HepG2 (cell line): ENCODE measurements at regions of chr9 and their contacts with region 1.

Region 1: DNA sequence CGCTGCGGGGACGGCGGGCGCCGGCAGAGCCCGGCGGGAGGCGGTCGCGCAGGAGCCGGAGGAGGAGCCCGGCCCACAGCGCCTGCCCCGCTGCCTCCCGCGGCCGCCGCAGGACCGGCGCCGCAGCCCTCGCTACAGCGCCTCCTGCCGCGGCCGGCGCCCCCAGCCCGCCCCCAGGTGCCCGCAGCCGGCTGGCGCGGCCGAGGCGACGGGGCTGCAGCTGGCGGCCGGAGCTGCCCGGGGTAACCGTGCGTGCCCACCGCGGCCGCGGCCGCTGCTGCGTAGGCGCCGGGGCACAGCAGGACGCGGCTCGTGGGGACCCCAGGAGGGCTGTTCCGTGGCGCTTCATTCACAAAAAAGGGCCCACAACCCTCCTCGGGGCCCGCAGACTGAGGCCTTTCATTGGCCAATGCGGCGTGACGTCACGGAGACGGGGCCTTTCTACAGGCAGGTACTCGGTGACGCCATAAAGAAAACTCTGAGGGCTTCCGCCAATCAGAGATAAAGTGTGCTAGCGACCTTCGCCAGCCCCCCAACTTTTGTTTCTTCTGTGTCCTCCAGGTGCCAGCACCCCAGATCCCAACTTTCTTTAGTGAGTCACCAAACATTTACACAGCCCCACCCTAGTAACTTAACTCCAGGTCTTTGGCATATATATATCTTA is at the start of gene CDC14B:
- DNase-seq: peak; percentile 92
- ATAC-seq: peak; percentile 74
- H3K4me3 ChIP-seq: peak within 1 kb of the TSS; percentile 85 to 89 (median 87)
- H3K27ac ChIP-seq: peak within 1 kb of the TSS; percentile 65
- H3K4me1 ChIP-seq: peaks cover 37% of the 10 kb centered on the region
- H3K27me3 ChIP-seq: no peaks in the 10 kb centered on the region; a peak in 1 of 5 replicates
- CTCF ChIP-seq: peak; percentile 17
- EP300 ChIP-seq: no peak
- POLR2A ChIP-seq: peak in 1 of 2 experiments; percentile 55; a peak in 1 of 4 replicates
- RAD21 ChIP-seq: peak; percentile 25; the same call in 1 of the 2 replicates
- total RNA-seq, gene CDC14B: 33.3 and 37.7 TPM in 2 replicates

Region 2: DNA sequence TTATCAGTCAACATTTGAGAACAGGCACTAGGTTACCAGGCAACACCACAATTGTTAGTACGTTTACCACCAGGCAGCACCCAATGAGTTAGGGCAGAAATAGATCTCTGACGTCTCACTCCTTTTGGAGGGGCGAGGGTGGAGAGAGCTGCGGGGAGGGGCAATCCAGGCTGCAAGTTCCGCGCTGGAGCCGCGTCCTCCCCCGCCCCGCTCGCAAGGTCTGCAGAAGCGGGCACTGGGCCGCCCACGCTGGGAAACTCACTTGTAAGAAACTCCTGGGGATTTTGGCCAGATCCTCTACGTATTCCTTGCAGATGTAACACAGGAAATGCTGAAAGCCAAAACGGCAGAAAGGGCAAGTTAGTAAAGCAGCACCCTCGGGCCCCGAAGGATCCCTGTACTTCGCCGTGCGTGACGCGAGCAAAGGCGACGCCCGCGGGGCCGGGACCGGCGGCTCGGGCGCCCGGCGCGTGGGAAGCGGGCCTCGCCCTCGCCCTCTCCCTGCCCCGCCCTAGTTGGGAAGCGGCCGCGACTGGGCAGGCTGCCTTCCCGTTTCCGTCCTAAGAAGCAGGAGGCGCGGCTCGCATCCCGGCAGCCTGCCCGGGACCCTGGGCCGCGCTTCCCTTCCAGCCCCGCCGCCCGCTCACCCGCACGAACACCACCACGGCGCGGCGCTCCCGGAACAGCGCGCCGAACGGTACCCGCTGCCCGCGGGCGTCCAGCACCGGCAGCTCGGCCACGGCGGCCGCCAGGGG is 35.0 kb after region 1 on chr9:
- CTCF ChIA-PET with region 1: no interaction called
- POLR2A ChIA-PET with region 1: interaction called, 5 read pairs
- in situ Hi-C with region 1: no loop called
- intact Hi-C with region 1: loop called (anchors 5 kb)
- DNase-seq: peak; percentile 41
- ATAC-seq: peak; percentile 73
- H3K4me3 ChIP-seq: peak overlapping the region; percentile 81 to 86 (median 81)
- H3K27ac ChIP-seq: peak overlapping the region; percentile 86
- H3K4me1 ChIP-seq: peaks cover 32% of the 10 kb centered on the region
- H3K27me3 ChIP-seq: no peaks in the 10 kb centered on the region; a peak in 1 of 5 replicates
- CTCF ChIP-seq: peak; percentile 40
- EP300 ChIP-seq: no peak
- POLR2A ChIP-seq: peak in 1 of 2 experiments; percentile 28; a peak in 1 of 4 replicates
- RAD21 ChIP-seq: no peak